CD14-positive monocyte (primary cell): ENCODE measurements at regions of chr7 and their contacts with region 1.

Region 1: DNA sequence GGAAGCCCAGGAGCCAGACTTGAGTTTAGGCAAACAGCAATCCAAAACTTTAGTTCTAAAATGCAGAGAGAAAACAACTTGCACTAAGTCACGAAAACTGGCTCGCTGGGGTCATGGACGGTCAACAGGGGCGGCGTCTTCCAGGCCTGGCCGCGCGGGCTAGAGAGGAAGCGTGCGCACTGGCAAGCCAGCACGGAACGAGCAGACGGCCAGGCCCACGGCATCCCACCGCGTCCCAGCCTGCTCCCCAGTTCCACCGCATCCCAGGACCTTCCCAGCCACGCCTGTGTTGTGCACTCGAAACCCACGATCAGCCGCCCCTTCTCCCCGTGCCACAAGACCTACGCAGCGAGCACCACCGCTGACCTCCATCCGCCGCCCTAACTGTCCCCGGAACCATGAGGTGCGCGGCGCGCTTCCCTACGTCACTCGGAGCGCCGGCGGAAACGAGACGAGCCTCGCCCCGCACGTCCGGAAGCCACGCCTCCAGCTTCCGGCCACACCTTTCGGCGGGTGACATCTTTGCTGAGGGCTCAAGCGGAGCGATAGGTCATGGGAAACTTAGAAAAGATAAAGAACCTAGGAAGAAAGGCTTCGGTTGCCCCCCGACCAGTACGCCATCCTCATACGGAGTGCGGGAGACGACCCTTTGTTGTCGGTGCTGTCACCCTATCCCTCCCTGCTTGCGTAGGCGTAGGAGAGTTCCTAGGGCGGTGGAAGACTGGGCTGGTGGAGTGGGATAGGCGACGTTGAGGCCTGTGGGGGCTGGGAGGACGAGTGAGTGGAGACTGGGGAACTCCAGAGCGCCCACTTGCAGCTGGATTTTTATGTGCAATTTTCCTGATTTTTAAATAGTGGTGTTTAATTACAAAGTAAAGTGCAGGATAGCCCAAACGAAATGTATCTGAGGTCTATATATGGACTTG is at the start of gene TBRG4:
- DNase-seq: peak; percentile 92 to 96 (median 94)
- H3K4me3 ChIP-seq: peak within 1 kb of the TSS; percentile 64 to 86 (median 85)
- H3K4me3 Mint-ChIP-seq: peak within 1 kb of the TSS; percentile 98 to 99
- H3K27ac ChIP-seq: peak within 1 kb of the TSS; percentile 93 to 98
- H3K27ac Mint-ChIP-seq: peak within 1 kb of the TSS; percentile 98 to 99 (median 99)
- H3K4me1 ChIP-seq: peaks cover 25 to 49% of the 10 kb centered on the region in 2 donors
- H3K4me1 Mint-ChIP-seq: peaks cover 44% of the 10 kb centered on the region
- H3K27me3 ChIP-seq: no peaks in the 10 kb centered on the region
- H3K27me3 Mint-ChIP-seq: peaks cover 0 to 5% (median 2%) of the 10 kb centered on the region in 3 donors
- CTCF ChIP-seq: peak; percentile 24
- polyA plus RNA-seq, gene TBRG4: 32.7 to 42.2 (median 38.4) TPM

Region 2: GRCh38 chr7:44573464-44574286 is 537.9 kb before region 1 on chr7 and contains the start of gene DDX56:
- intact Hi-C with region 1: loop called in 1 of 2 experiments (anchors 10 kb)
- DNase-seq: peak; percentile 93 to 99 (median 93)
- H3K4me3 ChIP-seq: peak within 1 kb of the TSS; percentile 65 to 88 (median 80)
- H3K4me3 Mint-ChIP-seq: peak within 1 kb of the TSS; percentile 93 to 98
- H3K27ac ChIP-seq: peak within 1 kb of the TSS; percentile 75 to 97
- H3K27ac Mint-ChIP-seq: peak within 1 kb of the TSS; percentile 95 to 99 (median 97)
- H3K4me1 ChIP-seq: peaks cover 20 to 23% of the 10 kb centered on the region in 2 donors
- H3K4me1 Mint-ChIP-seq: peaks cover 26% of the 10 kb centered on the region
- H3K27me3 ChIP-seq: no peaks in the 10 kb centered on the region
- H3K27me3 Mint-ChIP-seq: no peaks in the 10 kb centered on the region
- CTCF ChIP-seq: no peak
- polyA plus RNA-seq, gene DDX56: 32.2 to 69.3 (median 33.9) TPM

Region 3: GRCh38 chr7:44581879-44582603 is 529.5 kb before region 1 on chr7 and contains the start of gene TMED4:
- intact Hi-C with region 1: loop called (anchors 5 to 10 kb)
- DNase-seq: peak; percentile 99
- H3K4me3 ChIP-seq: peak within 1 kb of the TSS; percentile 69 to 90 (median 81)
- H3K4me3 Mint-ChIP-seq: peak within 1 kb of the TSS; percentile 87 to 95
- H3K27ac ChIP-seq: peak within 1 kb of the TSS; percentile 94 to 99
- H3K27ac Mint-ChIP-seq: peak within 1 kb of the TSS; percentile 97 to 99 (median 99)
- H3K4me1 ChIP-seq: peaks cover 18 to 22% of the 10 kb centered on the region in 2 donors
- H3K4me1 Mint-ChIP-seq: peaks cover 20% of the 10 kb centered on the region
- H3K27me3 ChIP-seq: no peaks in the 10 kb centered on the region
- H3K27me3 Mint-ChIP-seq: no peaks in the 10 kb centered on the region
- CTCF ChIP-seq: no peak
- polyA plus RNA-seq, gene TMED4: 45.7 to 76.7 (median 49.0) TPM

Region 4: GRCh38 chr7:44980393-44981034 is 131.0 kb before region 1 on chr7:
- intact Hi-C with region 1: loop called in 1 of 2 experiments (anchors 5 kb)
- DNase-seq: peak; percentile 95 to 99 (median 97)
- H3K4me3 ChIP-seq: peak overlapping the region in 1 of 3 experiments; percentile 99
- H3K4me3 Mint-ChIP-seq: peak overlapping the region; percentile 97
- H3K27ac ChIP-seq: peak overlapping the region; percentile 99 to 100
- H3K27ac Mint-ChIP-seq: peak overlapping the region; percentile 99 to 100 (median 99)
- H3K4me1 ChIP-seq: peaks cover 72 to 81% of the 10 kb centered on the region in 2 donors
- H3K4me1 Mint-ChIP-seq: peaks cover 72% of the 10 kb centered on the region
- H3K27me3 ChIP-seq: no peaks in the 10 kb centered on the region
- H3K27me3 Mint-ChIP-seq: peaks cover 0 to 6% (median 0%) of the 10 kb centered on the region in 3 donors
- CTCF ChIP-seq: no peak